ENCODE measurements at regions of chr3 and their contacts with region 1.

Region 1: GRCh38 chr3:129249276-129250065 is at the start of gene COPG1:
- H3K4me3 Mint-ChIP-seq: peak within 1 kb of the TSS; percentile 91
- H3K27ac Mint-ChIP-seq: peak within 1 kb of the TSS; percentile 97
- H3K4me1 Mint-ChIP-seq: peaks cover 38% of the 10 kb centered on the region
- H3K27me3 Mint-ChIP-seq: no peaks in the 10 kb centered on the region

Region 2: GRCh38 chr3:129052675-129053074 is 196.8 kb before region 1 on chr3:
- intact Hi-C with region 1: loop called (anchors 5 kb)
- H3K4me3 Mint-ChIP-seq: no peak overlapping the region
- H3K27ac Mint-ChIP-seq: no peak overlapping the region
- H3K4me1 Mint-ChIP-seq: no peaks in the 10 kb centered on the region
- H3K27me3 Mint-ChIP-seq: peaks cover 11% of the 10 kb centered on the region

Region 3: GRCh38 chr3:129063841-129064482 is 185.5 kb before region 1 on chr3:
- intact Hi-C with region 1: no loop called
- H3K4me3 Mint-ChIP-seq: no peak overlapping the region
- H3K27ac Mint-ChIP-seq: no peak overlapping the region
- H3K4me1 Mint-ChIP-seq: peaks cover 5% of the 10 kb centered on the region
- H3K27me3 Mint-ChIP-seq: peaks cover 12% of the 10 kb centered on the region

Region 4: GRCh38 chr3:129160891-129161859 is 88.3 kb before region 1 on chr3 and contains the start of gene ISY1:
- intact Hi-C with region 1: loop called (anchors 1 kb)
- H3K4me3 Mint-ChIP-seq: peak within 1 kb of the TSS; percentile 97
- H3K27ac Mint-ChIP-seq: peak within 1 kb of the TSS; percentile 100
- H3K4me1 Mint-ChIP-seq: peaks cover 42% of the 10 kb centered on the region
- H3K27me3 Mint-ChIP-seq: no peaks in the 10 kb centered on the region

Region 5: DNA sequence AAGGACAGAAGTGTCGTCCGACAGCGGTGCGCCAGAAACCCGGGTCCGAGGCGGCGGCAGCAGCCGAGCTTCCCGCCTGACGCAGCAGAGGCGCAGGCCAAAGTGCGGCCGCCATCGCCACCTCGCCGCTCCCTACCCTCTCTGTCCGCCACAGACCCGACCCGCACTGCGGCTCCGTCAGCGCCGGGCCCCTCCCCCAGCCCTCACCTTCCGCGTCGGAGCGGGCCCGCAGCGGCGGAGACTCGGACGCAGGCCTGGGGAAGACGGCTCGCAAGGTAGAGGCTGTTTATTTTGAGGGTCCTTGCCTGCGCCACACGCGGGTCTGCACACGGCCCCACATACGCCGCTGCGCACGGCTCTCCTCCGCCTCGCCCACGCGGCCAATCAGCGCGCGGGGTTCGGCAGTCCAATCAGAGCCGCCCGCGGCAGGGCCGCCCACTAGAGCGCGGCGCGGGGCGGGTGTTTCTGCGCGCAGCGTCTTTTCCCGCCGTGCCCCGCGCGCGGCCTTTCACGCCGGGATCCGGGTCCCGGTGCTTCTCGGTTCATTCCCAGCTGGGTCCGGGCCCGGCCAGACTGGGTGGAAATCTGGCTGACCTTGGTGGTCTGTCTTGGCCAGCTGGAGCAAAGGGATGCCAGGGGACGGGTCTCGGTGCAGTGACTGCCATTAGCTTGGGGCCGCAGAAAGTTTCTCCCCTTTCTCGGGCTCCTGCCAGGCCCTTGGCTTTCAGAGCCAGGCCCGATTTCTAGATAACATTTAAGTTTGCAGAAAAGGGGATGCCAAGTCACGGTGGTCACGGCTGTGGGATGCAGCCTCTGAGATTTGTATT is 65.7 kb before region 1 on chr3 and contains the start of gene CNBP:
- intact Hi-C with region 1: loop called (anchors 1 kb)
- H3K4me3 Mint-ChIP-seq: peak within 1 kb of the TSS; percentile 92
- H3K27ac Mint-ChIP-seq: peak within 1 kb of the TSS; percentile 99
- H3K4me1 Mint-ChIP-seq: peaks cover 31% of the 10 kb centered on the region
- H3K27me3 Mint-ChIP-seq: no peaks in the 10 kb centered on the region

Region 6: GRCh38 chr3:129226357-129226756 is 23.1 kb before region 1 on chr3:
- intact Hi-C with region 1: loop called (anchors 2 kb)
- H3K4me3 Mint-ChIP-seq: no peak overlapping the region
- H3K27ac Mint-ChIP-seq: peak overlapping the region; percentile 100
- H3K4me1 Mint-ChIP-seq: peaks cover 63% of the 10 kb centered on the region
- H3K27me3 Mint-ChIP-seq: no peaks in the 10 kb centered on the region

Measured in dendritic cell treated with granulocyte-macrophage colony-stimulating factor and Interleukin-4, amounts not matched to agents 40 ng/mL and 50 ng/mL, for 4 days (primary cell).